Caco-2 (cell line): ENCODE measurements at regions of chr12 and their contacts with region 1.

Region 1: DNA sequence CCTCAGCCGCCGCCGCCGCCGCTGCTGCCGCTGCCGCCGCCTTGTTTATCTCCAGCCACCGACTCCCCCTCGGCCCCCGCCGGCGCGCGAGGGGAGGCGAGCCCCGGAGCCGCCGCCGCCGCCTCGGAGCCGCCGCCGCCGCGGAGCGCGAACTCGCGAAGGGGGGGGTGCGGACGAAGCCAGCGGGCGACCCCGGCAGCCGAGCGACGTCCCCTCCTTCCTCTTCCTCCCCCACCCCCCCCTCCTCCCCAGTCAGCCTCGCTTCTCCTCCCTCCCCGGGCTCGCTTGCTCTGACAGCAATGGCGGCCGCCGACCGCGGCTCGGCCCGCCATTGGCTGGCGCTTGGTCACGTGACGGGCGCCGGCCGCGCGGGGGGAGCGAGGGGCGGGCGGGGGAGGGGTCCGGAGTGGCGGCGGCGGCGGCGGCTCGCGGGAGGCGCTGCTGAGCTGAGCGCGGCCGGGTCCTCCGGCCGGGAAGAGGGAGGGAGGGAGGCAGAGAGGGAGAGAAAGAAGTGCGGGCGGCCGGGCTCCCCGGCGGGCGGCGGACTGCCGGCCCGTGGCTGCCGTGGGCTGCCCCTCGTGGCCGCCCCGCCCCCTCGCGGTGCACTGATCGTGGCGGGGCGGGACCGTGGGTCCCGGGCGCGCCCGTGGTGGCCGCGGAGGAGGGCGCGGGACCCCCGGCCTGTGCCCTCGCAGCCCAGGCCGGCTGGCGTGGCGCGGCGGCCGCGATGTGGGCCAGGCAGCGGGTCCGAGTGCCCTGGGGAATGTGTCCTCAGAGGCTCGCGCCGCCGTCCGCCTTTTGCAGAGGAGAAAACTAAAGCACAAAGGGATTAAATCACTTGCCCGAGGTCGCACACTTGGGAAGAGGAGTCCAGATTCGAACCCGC is at the start of gene MED13L:
- DNase-seq: peak; percentile 86 to 92
- H3K4me3 ChIP-seq: peak within 1 kb of the TSS; percentile 81
- H3K4me3 Mint-ChIP-seq: peak within 1 kb of the TSS; percentile 83
- H3K27ac Mint-ChIP-seq: peak within 1 kb of the TSS; percentile 92
- H3K4me1 ChIP-seq: peaks cover 20% of the 10 kb centered on the region
- H3K4me1 Mint-ChIP-seq: peaks cover 30% of the 10 kb centered on the region
- H3K27me3 ChIP-seq: no peaks in the 10 kb centered on the region
- H3K27me3 Mint-ChIP-seq: no peaks in the 10 kb centered on the region
- CTCF ChIP-seq: peak in 1 of 2 experiments; percentile 18
- total RNA-seq, gene MED13L: 160 and 168 TPM in 2 replicates

Region 2: DNA sequence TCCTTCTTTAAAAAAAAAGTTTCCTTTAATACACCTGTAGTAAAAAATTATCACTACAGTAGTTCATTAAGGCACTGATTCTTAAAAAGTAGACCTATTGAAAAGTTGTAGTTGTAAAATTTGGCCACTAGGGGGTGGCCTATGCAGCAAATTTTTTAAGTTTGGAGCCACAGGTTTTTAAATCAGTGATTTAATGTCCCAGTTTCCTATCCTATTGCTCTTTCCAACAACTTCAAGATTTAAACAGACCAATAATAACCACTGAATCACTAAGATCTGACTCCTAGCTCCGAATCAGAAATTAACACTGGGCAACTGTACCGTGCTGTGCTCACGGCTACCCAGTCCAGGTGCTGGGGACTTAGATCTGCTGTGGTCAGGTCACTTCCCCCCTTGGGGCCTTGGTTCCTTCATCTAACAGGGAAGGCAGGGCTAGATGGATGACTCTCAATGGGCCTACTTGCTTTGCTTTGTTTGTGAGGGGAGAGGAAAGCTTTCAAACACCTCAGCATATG is 279.5 kb before region 1 on chr12:
- CTCF ChIA-PET with region 1: no interaction called
- POLR2A ChIA-PET with region 1: no interaction called
- intact Hi-C with region 1: loop called (anchors 5 kb)
- DNase-seq: peak in 1 of 2 experiments; percentile 42
- H3K4me3 ChIP-seq: no peak overlapping the region
- H3K4me3 Mint-ChIP-seq: no peak overlapping the region
- H3K27ac Mint-ChIP-seq: no peak overlapping the region
- H3K4me1 ChIP-seq: peaks cover 4% of the 10 kb centered on the region; the same call in 1 of the 2 replicates
- H3K4me1 Mint-ChIP-seq: peaks cover 6% of the 10 kb centered on the region
- H3K27me3 ChIP-seq: no peaks in the 10 kb centered on the region
- H3K27me3 Mint-ChIP-seq: no peaks in the 10 kb centered on the region
- CTCF ChIP-seq: peak; percentile 58 to 75

Region 3: DNA sequence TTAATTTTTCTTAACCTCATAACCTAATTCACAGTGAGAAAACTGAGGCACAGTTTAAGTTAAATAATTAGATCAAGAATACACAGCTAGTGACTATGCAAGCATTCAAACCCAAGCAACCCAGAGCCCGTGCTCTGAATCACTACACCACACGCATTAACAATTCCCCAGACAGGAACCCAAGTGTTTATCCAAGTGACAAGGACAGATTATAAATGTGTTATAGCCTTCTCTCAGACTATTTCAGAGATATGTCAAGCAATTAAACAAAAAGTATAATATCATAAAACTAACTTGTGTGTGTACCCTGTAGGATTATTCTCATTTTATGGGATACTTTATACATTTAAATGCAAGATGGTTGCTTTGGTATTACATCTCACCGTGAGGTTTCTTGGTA is 44.0 kb before region 1 on chr12:
- CTCF ChIA-PET with region 1: no interaction called
- POLR2A ChIA-PET with region 1: no interaction called
- intact Hi-C with region 1: no loop called
- DNase-seq: no peak
- H3K4me3 ChIP-seq: no peak overlapping the region
- H3K4me3 Mint-ChIP-seq: no peak overlapping the region
- H3K27ac Mint-ChIP-seq: no peak overlapping the region
- H3K4me1 ChIP-seq: peaks cover 6% of the 10 kb centered on the region; the same call in 1 of the 2 replicates
- H3K4me1 Mint-ChIP-seq: peaks cover 16% of the 10 kb centered on the region
- H3K27me3 ChIP-seq: no peaks in the 10 kb centered on the region
- H3K27me3 Mint-ChIP-seq: no peaks in the 10 kb centered on the region
- CTCF ChIP-seq: no peak

Region 4: DNA sequence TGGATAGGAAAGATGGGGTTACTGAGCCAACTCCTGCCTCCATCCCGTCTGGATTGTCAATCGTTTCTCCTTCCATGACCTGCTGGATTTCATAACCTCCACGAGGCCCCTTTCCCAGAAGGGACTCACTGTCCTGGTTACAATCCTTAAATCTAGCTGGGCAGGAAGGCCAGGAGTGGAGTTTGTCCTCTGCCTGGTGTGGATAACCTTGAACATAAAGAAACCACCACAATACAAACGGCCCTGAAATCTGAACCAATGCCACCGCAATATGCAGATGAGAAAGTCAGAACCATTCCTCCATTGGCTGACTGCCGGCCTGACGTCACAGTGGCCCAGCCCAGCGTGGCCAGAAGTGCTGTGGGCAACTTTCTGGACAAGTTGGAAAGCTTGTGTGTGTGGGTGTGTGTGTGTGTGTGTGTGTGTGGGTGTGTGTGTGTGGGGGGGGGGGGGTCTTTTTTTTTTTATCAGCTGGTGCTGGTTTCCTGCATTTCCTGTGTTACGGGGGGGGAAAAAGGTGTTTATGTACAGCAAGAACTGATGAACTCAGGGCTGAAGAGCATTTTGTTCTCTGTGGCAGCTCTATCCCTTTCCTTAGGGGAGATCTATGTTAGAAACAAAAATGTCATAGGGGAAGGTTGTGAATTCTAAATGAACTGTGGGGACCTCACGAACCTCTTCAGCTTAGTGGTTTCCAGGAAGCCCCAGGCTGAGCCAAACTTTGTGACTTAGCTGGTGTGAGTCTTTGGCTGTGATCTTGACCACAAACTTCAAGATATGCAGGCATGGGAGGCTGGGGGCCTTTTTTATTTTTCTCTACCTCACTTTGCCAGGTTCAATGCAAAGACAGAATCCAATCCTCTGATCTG is 81.5 kb after region 1 on chr12:
- CTCF ChIA-PET with region 1: interaction called, 4 read pairs
- POLR2A ChIA-PET with region 1: no interaction called
- intact Hi-C with region 1: loop called (anchors 5 kb)
- DNase-seq: peak; percentile 90 to 94
- H3K4me3 ChIP-seq: no peak overlapping the region
- H3K4me3 Mint-ChIP-seq: peak overlapping the region; percentile 50
- H3K27ac Mint-ChIP-seq: peak overlapping the region; percentile 88
- H3K4me1 ChIP-seq: peaks cover 13% of the 10 kb centered on the region
- H3K4me1 Mint-ChIP-seq: peaks cover 21% of the 10 kb centered on the region
- H3K27me3 ChIP-seq: no peaks in the 10 kb centered on the region
- H3K27me3 Mint-ChIP-seq: no peaks in the 10 kb centered on the region
- CTCF ChIP-seq: no peak

Region 5: DNA sequence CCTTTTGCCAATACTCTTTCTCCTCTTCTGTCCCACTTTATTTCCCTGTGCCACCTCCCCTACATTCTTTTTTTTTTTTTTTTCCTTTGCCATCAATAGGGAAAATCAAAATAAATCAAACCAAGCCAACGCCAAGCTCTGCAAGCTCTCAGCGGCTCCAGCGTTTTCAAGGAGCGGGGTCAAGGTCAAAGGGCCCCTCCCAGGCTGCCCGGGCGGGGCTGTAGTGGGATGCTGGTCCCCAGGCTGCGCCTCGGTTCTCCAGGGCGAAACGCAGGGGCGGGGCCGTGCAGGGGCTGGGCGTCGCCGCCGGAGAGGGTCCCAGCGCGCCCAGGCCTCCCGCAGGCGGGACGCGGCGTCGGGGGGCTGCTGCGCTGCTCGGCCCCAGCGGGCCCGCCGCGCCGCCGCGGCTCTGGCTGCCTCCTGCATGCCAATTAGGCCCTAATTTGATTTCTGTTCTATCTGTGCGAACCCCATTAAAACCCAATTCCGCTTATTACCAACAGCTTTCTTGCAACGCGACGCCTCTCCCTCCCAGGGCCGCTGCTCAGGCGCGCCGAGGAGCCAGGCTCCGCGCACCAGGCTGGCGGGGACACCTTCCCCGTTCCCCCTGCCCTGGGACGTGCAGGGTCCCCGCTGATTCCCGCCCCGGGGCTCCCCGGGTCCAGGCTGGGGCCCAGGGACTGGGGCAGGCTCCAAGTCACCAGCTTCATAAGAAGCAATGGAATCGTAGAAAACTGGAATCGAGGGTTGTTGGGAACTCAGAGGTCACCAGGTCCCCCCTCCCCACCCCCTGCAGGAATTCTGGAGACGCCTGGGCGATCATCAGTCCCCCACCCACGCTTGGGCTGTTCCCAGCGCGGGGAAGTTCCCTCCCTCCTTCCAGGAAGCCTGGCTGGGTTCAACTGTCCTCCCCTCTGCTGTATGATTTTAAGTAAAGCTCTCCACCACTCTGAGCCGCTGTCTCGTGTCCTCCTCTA is 230.8 kb after region 1 on chr12:
- CTCF ChIA-PET with region 1: no interaction called
- POLR2A ChIA-PET with region 1: no interaction called
- intact Hi-C with region 1: loop called (anchors 10 kb)
- DNase-seq: peak; percentile 48 to 50
- H3K4me3 ChIP-seq: peak overlapping the region; percentile 37
- H3K4me3 Mint-ChIP-seq: peak overlapping the region; percentile 65
- H3K27ac Mint-ChIP-seq: no peak overlapping the region
- H3K4me1 ChIP-seq: peaks cover 23% of the 10 kb centered on the region
- H3K4me1 Mint-ChIP-seq: peaks cover 16% of the 10 kb centered on the region
- H3K27me3 ChIP-seq: no peaks in the 10 kb centered on the region
- H3K27me3 Mint-ChIP-seq: no peaks in the 10 kb centered on the region
- CTCF ChIP-seq: no peak

Region 6: DNA sequence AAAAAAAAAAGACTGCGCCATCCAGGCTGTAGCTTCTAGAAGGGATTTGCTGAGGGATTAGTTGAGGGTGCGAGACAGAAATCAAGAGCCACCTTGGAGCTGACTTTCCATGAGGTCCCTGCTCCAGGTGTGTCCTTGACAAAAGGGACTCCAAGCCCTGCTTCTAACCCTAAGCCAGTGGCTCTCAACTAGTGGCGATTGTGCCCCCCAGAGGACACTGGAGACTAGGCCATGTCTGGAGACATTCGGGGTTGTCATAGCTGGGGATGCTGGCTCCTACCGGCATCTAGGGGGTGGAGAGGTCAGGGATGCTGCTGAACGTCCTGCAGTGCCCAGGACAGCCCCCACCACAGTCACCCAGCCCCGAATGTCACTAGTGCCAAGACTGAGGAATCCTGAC is 419.7 kb after region 1 on chr12:
- CTCF ChIA-PET with region 1: no interaction called
- POLR2A ChIA-PET with region 1: no interaction called
- intact Hi-C with region 1: loop called (anchors 5 kb)
- DNase-seq: peak; percentile 75 to 77
- H3K4me3 ChIP-seq: no peak overlapping the region
- H3K4me3 Mint-ChIP-seq: peak overlapping the region; percentile 29
- H3K27ac Mint-ChIP-seq: peak overlapping the region; percentile 29
- H3K4me1 ChIP-seq: peaks cover 14% of the 10 kb centered on the region
- H3K4me1 Mint-ChIP-seq: peaks cover 23% of the 10 kb centered on the region
- H3K27me3 ChIP-seq: no peaks in the 10 kb centered on the region; the same call in 1 of the 2 replicates
- H3K27me3 Mint-ChIP-seq: no peaks in the 10 kb centered on the region
- CTCF ChIP-seq: peak; percentile 36 to 39